Dendritic cell treated with granulocyte-macrophage colony-stimulating factor and Interleukin-4, amounts not matched to agents 40 ng/mL and 50 ng/mL, for 4 days (primary cell): ENCODE measurements at regions of chrX and their contacts with region 1.

Region 1: GRCh38 chrX:54921427-54922021 is 900 bp downstream of the TRO start:
- H3K4me3 Mint-ChIP-seq: peak overlapping the region; percentile 66
- H3K27ac Mint-ChIP-seq: peak overlapping the region; percentile 63
- H3K4me1 Mint-ChIP-seq: peaks cover 22% of the 10 kb centered on the region
- H3K27me3 Mint-ChIP-seq: peaks cover 26% of the 10 kb centered on the region

Region 2: GRCh38 chrX:54758114-54759055 is 163.1 kb before region 1 on chrX:
- intact Hi-C with region 1: no loop called
- H3K4me3 Mint-ChIP-seq: no peak overlapping the region
- H3K27ac Mint-ChIP-seq: no peak overlapping the region
- H3K4me1 Mint-ChIP-seq: no peaks in the 10 kb centered on the region
- H3K27me3 Mint-ChIP-seq: no peaks in the 10 kb centered on the region

Region 3: DNA sequence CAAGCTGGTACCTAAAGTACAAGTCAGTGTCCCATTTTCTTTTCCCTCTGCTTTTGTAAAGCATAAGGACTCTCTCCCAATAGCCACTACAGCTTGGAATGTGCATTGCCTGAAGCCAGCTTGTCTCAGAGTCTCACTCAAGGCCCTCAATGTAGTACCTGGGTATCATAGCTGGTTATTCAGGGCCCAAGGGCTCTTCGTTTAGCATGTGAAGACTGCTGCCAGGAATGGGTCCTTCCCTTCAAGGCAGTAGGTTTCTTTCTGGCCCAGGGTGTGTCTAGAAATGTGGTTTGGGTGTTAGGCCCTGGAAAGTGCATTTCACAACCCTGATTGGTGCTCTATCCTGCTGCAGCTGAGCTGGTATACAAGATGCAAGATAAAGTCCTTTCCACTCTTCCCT is 82.2 kb before region 1 on chrX:
- intact Hi-C with region 1: no loop called
- H3K4me3 Mint-ChIP-seq: no peak overlapping the region
- H3K27ac Mint-ChIP-seq: no peak overlapping the region
- H3K4me1 Mint-ChIP-seq: no peaks in the 10 kb centered on the region
- H3K27me3 Mint-ChIP-seq: no peaks in the 10 kb centered on the region

Region 4: DNA sequence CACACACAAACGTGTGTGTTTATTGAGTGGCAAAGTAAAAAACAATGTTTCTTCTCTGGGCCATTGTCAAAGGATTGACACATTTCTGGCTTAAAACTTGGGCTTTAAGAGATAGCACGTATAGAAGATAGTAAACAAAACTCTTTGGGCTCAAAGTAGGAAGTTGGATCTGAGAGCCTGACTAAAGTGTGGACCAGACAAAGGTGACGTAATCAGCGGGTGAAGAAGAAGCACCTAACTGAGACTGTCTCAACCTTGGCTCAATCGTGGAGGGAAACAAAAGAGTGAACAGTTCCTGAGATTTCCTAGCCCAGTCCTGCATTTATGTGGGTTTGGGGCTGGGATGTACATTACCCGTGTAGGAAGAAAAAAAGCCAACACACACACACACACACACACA is 58.8 kb after region 1 on chrX:
- intact Hi-C with region 1: loop called (anchors 10 kb)
- H3K4me3 Mint-ChIP-seq: no peak overlapping the region
- H3K27ac Mint-ChIP-seq: no peak overlapping the region
- H3K4me1 Mint-ChIP-seq: no peaks in the 10 kb centered on the region
- H3K27me3 Mint-ChIP-seq: no peaks in the 10 kb centered on the region

Region 5: GRCh38 chrX:54999717-55000598 is 78.4 kb after region 1 on chrX and contains the start of gene APEX2:
- intact Hi-C with region 1: no loop called
- H3K4me3 Mint-ChIP-seq: peak within 1 kb of the TSS; percentile 98
- H3K27ac Mint-ChIP-seq: peak within 1 kb of the TSS; percentile 97
- H3K4me1 Mint-ChIP-seq: peaks cover 45% of the 10 kb centered on the region
- H3K27me3 Mint-ChIP-seq: no peaks in the 10 kb centered on the region